Activated naive CD4-positive, alpha-beta T cell treated with anti-CD3 and anti-CD28 coated beads, Interleukin-2, amount 10 ng/mL, durations not matched to agents 7 days and 5 days (primary cell): ENCODE measurements at regions of chr1 and their contacts with region 1.

Region 1: GRCh38 chr1:39973503-39974135 is 18.7 kb downstream of the MFSD2A start:
- DNase-seq: peak; percentile 81
- H3K4me3 Mint-ChIP-seq: no peak overlapping the region
- H3K27ac Mint-ChIP-seq: no peak overlapping the region
- H3K4me1 Mint-ChIP-seq: peaks cover 5% of the 10 kb centered on the region
- H3K27me3 Mint-ChIP-seq: peaks cover 6% of the 10 kb centered on the region

Region 2: GRCh38 chr1:39816415-39817090 is 157.1 kb before region 1 on chr1:
- CTCF ChIA-PET with region 1: interaction called, 72 read pairs
- DNase-seq: peak; percentile 67
- H3K4me3 Mint-ChIP-seq: peak overlapping the region; percentile 24
- H3K27ac Mint-ChIP-seq: no peak overlapping the region
- H3K4me1 Mint-ChIP-seq: peaks cover 11% of the 10 kb centered on the region
- H3K27me3 Mint-ChIP-seq: peaks cover 44% of the 10 kb centered on the region

Region 3: DNA sequence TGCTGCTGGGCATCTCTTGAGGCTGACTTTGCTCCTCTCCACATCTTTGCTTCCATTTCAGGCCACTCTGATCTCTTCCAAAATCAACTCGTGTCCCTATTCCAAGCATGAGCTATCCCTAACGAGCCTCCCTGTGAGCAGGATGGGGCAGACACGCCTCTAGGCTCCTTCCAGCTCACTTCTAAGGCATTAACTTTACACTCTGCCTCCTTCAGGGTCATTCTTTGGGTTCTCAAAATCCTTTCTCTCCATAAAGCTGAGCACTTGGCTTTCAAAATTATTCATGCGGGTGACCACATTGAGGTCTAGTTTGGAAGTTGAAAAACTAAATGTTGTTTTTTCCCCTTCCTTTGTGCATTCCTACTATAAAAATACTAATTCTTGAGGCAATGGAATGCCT is 151.5 kb before region 1 on chr1:
- CTCF ChIA-PET with region 1: interaction called, 72 read pairs
- DNase-seq: no peak
- H3K4me3 Mint-ChIP-seq: no peak overlapping the region
- H3K27ac Mint-ChIP-seq: no peak overlapping the region
- H3K4me1 Mint-ChIP-seq: peaks cover 6% of the 10 kb centered on the region
- H3K27me3 Mint-ChIP-seq: peaks cover 58% of the 10 kb centered on the region

Region 4: DNA sequence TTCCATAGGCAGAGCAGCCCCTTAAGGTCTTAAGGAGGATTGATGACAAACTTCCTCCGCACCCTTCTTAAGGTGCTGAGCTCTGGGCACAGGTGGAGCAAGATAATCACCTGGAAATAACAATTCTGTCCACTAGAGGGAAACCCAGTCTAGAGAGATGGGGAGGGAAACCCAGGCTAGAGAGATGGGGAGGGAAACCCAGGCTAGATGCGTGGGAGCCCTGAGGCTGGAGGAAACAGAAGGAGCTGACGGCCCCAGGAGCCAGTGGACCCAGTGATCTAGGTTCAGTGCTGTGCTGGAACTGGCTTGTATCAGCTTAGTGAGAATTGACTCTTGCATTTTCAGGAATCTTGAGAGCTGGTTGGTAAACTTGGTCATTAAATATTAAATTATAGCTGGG is 54.1 kb before region 1 on chr1:
- CTCF ChIA-PET with region 1: interaction called, 96 read pairs
- DNase-seq: peak; percentile 55
- H3K4me3 Mint-ChIP-seq: no peak overlapping the region
- H3K27ac Mint-ChIP-seq: no peak overlapping the region
- H3K4me1 Mint-ChIP-seq: no peaks in the 10 kb centered on the region
- H3K27me3 Mint-ChIP-seq: peaks cover 42% of the 10 kb centered on the region

Region 5: DNA sequence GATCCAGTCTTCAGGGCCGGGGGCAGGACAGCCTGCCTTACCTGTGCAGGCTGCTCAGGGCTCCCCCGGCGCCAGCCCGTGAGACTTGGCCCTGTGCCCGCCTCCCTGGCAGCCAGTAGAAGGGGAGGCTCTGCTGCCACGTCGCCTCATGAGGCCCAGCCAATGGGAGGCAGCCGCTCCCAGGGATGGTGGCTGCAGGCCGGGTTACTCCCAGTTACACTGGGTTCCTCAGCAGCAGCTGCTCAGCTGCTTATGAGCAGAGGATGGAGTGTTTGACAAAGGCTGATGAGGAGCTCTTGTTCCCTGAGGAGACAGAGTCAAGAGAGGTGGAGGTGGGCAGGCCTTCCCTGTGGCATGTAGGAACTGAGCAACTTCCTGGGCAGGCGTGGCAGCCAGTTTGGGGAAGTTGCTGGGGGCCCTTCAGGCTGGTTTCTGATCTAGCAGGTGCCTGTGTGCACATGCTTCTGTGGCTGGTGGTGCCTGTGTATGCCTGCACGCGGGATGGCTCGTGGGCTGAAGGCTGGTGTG is 13.1 kb before region 1 on chr1:
- CTCF ChIA-PET with region 1: interaction called, 11 read pairs
- DNase-seq: peak; percentile 64
- H3K4me3 Mint-ChIP-seq: peak overlapping the region; percentile 33
- H3K27ac Mint-ChIP-seq: peak overlapping the region; percentile 85
- H3K4me1 Mint-ChIP-seq: peaks cover 36% of the 10 kb centered on the region
- H3K27me3 Mint-ChIP-seq: peaks cover 17% of the 10 kb centered on the region

Region 6: DNA sequence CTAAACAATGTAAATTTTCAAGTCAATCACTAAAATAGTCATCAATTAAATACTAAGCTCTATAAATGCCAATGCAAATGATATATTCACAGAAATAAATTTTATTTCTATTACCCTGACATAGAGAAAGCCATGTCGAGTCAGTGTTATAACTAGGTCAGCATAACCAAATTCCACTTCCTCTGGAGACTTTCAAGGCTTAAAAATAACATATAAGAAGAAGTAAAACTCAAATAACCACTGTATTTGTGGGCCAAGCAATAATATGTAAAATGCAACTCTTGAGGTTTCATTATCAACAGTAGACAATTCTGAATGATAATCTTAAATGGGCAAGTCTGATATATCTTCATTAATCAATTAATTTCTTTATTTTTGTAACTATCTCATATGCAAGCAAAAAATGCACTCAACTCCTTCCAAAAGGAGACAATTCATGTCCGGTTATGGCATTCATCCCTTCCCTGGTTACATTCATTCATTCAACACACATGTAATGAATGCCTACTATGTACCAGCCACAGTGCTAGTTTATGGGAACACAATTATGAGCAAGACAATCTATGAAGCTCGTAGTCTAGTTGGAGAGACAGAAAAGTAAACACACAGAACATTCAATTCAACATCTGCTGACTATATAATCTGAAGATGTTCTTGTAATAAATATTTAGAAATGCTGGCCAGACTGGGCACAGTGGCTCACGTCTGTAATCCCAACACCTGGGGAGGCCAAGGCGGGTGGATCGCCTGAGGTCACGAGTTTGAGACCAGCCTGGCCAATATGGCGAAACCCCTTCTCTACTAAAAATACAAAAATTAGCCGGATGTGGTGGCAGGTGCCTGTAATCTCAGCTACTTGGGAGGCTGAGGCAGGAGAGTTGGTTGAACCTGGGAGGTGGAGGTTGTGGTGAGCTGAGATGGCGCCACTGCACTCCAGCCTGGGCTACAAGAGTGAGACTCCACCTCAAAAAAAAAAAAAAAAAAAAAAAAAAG is 29.8 kb after region 1 on chr1:
- CTCF ChIA-PET with region 1: no interaction called
- DNase-seq: no peak
- H3K4me3 Mint-ChIP-seq: no peak overlapping the region
- H3K27ac Mint-ChIP-seq: no peak overlapping the region
- H3K4me1 Mint-ChIP-seq: no peaks in the 10 kb centered on the region
- H3K27me3 Mint-ChIP-seq: peaks cover 6% of the 10 kb centered on the region

Region 7: GRCh38 chr1:40032240-40032891 is 58.7 kb after region 1 on chr1:
- CTCF ChIA-PET with region 1: interaction called, 20 read pairs
- DNase-seq: peak; percentile 69
- H3K4me3 Mint-ChIP-seq: no peak overlapping the region
- H3K27ac Mint-ChIP-seq: peak overlapping the region; percentile 20
- H3K4me1 Mint-ChIP-seq: peaks cover 54% of the 10 kb centered on the region
- H3K27me3 Mint-ChIP-seq: no peaks in the 10 kb centered on the region